CD4-positive, alpha-beta T cell (primary cell): ENCODE measurements at regions of chr1 and their contacts with region 1.

Region 1: GRCh38 chr1:212035123-212035834 is at the starts of genes DTL and INTS7:
- DNase-seq: peak; percentile 94 to 100 (median 98)
- ATAC-seq: peak; percentile 88
- H3K4me3 ChIP-seq: peak within 1 kb of the TSS; percentile 83
- H3K4me3 Mint-ChIP-seq: peak within 1 kb of the TSS; percentile 95
- H3K27ac ChIP-seq: peak within 1 kb of the TSS; percentile 55 to 77
- H3K27ac Mint-ChIP-seq: peak within 1 kb of the TSS; percentile 95
- H3K4me1 ChIP-seq: peaks cover 16% of the 10 kb centered on the region
- H3K4me1 Mint-ChIP-seq: peaks cover 66% of the 10 kb centered on the region
- H3K27me3 ChIP-seq: no peaks in the 10 kb centered on the region
- H3K27me3 Mint-ChIP-seq: no peaks in the 10 kb centered on the region
- CTCF ChIP-seq: peak; percentile 99
- total RNA-seq, gene DTL: 0.49 to 0.64 TPM
- total RNA-seq, gene INTS7: 2.9 to 3.2 TPM

Region 2: GRCh38 chr1:212012034-212012740 is 23.1 kb before region 1 on chr1:
- CTCF ChIA-PET with region 1: interaction called, 17 read pairs
- POLR2A ChIA-PET with region 1: interaction called, 5 read pairs
- intact Hi-C with region 1: no loop called
- DNase-seq: peak; percentile 39 to 80 (median 51)
- ATAC-seq: peak; percentile 100
- H3K4me3 ChIP-seq: no peak overlapping the region
- H3K4me3 Mint-ChIP-seq: no peak overlapping the region
- H3K27ac ChIP-seq: no peak overlapping the region
- H3K27ac Mint-ChIP-seq: no peak overlapping the region
- H3K4me1 ChIP-seq: no peaks in the 10 kb centered on the region
- H3K4me1 Mint-ChIP-seq: no peaks in the 10 kb centered on the region
- H3K27me3 ChIP-seq: no peaks in the 10 kb centered on the region
- H3K27me3 Mint-ChIP-seq: no peaks in the 10 kb centered on the region
- CTCF ChIP-seq: peak; percentile 89

Region 3: DNA sequence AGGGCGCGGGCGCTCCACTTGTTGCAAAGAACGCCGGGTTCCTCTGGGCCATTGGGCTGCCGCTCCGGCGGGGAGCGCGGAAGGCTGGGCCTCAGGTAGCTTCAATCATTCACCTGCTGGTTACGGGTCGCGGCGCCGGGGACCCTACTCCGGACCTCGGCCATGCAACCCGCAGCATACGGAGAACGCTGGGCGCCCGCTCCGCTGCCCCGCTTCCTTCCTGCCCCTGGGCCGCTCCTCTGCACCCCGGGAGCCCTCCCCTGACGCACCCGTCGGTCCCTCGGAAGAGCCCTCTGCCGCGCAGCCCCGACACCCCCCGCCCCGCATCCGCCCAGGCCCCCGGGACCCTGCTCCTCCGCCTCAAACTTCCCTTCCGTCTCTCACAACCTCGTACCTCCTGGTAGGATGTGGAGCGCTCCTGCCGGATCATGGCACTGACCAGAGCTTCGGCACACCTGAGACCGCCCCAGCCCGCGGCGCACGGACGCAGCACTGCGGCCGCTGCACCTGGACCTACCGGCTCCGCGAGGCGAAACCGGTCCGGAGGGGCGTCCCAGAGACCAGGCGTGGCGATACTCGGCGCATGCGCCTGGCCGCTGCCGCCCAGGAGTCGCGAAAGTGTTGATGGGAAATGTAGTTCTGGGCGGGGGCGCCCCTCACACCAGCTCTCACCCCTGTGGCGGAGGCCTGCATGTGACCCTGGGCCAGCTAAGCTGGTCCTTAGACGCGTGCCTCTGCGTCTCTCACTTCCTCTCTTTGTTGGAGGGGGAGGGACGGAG is 379.2 kb after region 1 on chr1 and contains the start of gene PACC1:
- CTCF ChIA-PET with region 1: no interaction called
- POLR2A ChIA-PET with region 1: interaction called, 5 read pairs
- intact Hi-C with region 1: loop called in 1 of 2 experiments (anchors 2 kb)
- DNase-seq: peak; percentile 70 to 95 (median 81)
- ATAC-seq: peak; percentile 85
- H3K4me3 ChIP-seq: peak within 1 kb of the TSS; percentile 76
- H3K4me3 Mint-ChIP-seq: peak within 1 kb of the TSS; percentile 89
- H3K27ac ChIP-seq: peak within 1 kb of the TSS; percentile 40 to 72
- H3K27ac Mint-ChIP-seq: peak within 1 kb of the TSS; percentile 82
- H3K4me1 ChIP-seq: peaks cover 30% of the 10 kb centered on the region
- H3K4me1 Mint-ChIP-seq: peaks cover 22% of the 10 kb centered on the region
- H3K27me3 ChIP-seq: no peaks in the 10 kb centered on the region
- H3K27me3 Mint-ChIP-seq: no peaks in the 10 kb centered on the region
- CTCF ChIP-seq: no peak
- total RNA-seq, gene PACC1: 1.8 to 2.1 TPM

Region 4: DNA sequence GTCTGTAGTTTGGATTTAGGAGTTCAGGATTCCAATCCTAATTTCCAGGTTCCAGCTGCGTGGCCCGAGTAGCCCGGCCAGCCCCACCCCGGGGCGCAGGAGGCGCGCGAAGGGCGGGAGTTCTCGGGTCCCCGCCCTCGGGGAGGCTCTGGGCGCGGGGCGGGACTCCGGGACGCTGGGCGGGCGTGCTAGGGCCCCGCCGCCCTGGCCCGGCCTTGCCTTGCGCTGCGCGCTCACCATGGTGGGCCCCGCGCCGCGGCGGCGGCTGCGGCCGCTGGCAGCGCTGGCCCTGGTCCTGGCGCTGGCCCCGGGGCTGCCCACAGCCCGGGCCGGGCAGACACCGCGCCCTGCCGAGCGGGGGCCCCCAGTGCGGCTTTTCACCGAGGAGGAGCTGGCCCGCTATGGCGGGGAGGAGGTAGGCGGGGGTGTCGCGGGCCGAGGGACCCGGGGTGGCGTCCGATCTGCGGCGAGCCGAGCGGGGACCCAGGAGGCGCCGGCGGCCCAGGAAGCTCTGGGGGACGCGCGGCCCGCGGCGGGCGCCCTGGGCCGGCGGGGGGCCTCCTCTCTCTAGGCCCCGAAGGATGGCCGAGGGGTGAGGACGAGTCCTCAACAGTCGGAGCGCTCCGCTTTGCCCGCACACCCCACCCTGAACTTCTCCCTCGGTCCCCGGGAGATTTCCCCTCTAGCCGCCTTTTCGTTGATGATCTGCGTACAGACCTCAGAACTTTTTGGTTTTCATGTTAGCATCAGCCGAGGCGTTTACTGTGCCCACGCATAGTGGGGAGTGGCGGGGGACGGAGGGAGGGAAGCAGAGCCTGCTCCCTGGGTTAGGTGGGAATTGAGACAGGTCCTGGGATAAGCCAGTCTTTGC is 397.7 kb after region 1 on chr1 and contains the start of gene NENF:
- CTCF ChIA-PET with region 1: no interaction called
- POLR2A ChIA-PET with region 1: interaction called, 11 read pairs
- intact Hi-C with region 1: no loop called
- DNase-seq: peak; percentile 39 to 86 (median 70)
- ATAC-seq: peak; percentile 99
- H3K4me3 ChIP-seq: peak within 1 kb of the TSS; percentile 69
- H3K4me3 Mint-ChIP-seq: peak within 1 kb of the TSS; percentile 87
- H3K27ac ChIP-seq: no peak within 1 kb of the TSS
- H3K27ac Mint-ChIP-seq: peak within 1 kb of the TSS; percentile 65
- H3K4me1 ChIP-seq: peaks cover 20% of the 10 kb centered on the region
- H3K4me1 Mint-ChIP-seq: peaks cover 24% of the 10 kb centered on the region
- H3K27me3 ChIP-seq: no peaks in the 10 kb centered on the region
- H3K27me3 Mint-ChIP-seq: no peaks in the 10 kb centered on the region
- CTCF ChIP-seq: no peak
- total RNA-seq, gene NENF: 21.2 to 22.4 TPM